Natural killer cell (primary cell): ENCODE measurements at regions of chr17 and their contacts with region 1.

Region 1: GRCh38 chr17:8189711-8190477 is at the start of gene BORCS6:
- DNase-seq: peak; percentile 91 to 98
- ATAC-seq: peak; percentile 67 to 88 (median 75)
- H3K4me3 ChIP-seq: peak within 1 kb of the TSS; percentile 67
- H3K4me3 Mint-ChIP-seq: no peak within 1 kb of the TSS
- H3K27ac ChIP-seq: peak within 1 kb of the TSS; percentile 86
- H3K27ac Mint-ChIP-seq: no peak within 1 kb of the TSS
- H3K4me1 ChIP-seq: peaks cover 57% of the 10 kb centered on the region
- H3K4me1 Mint-ChIP-seq: peaks cover 13% of the 10 kb centered on the region in 2 donors
- H3K27me3 ChIP-seq: no peaks in the 10 kb centered on the region
- H3K27me3 Mint-ChIP-seq: no peaks in the 10 kb centered on the region
- CTCF ChIP-seq: no peak
- total RNA-seq, gene BORCS6: 10.2 to 15.6 (median 11.6) TPM

Region 2: GRCh38 chr17:7989781-7990655 is 199.9 kb before region 1 on chr17:
- intact Hi-C with region 1: no loop called
- DNase-seq: peak; percentile 94
- ATAC-seq: peak; percentile 89 to 93 (median 91)
- H3K4me3 ChIP-seq: peak overlapping the region; percentile 37
- H3K4me3 Mint-ChIP-seq: peak overlapping the region; percentile 89
- H3K27ac ChIP-seq: peak overlapping the region; percentile 48
- H3K27ac Mint-ChIP-seq: peak overlapping the region; percentile 83 to 91
- H3K4me1 ChIP-seq: peaks cover 16% of the 10 kb centered on the region
- H3K4me1 Mint-ChIP-seq: peaks cover 22 to 25% of the 10 kb centered on the region in 2 donors
- H3K27me3 ChIP-seq: no peaks in the 10 kb centered on the region
- H3K27me3 Mint-ChIP-seq: peaks cover 9 to 11% of the 10 kb centered on the region in 2 donors
- CTCF ChIP-seq: peak; percentile 90

Region 3: DNA sequence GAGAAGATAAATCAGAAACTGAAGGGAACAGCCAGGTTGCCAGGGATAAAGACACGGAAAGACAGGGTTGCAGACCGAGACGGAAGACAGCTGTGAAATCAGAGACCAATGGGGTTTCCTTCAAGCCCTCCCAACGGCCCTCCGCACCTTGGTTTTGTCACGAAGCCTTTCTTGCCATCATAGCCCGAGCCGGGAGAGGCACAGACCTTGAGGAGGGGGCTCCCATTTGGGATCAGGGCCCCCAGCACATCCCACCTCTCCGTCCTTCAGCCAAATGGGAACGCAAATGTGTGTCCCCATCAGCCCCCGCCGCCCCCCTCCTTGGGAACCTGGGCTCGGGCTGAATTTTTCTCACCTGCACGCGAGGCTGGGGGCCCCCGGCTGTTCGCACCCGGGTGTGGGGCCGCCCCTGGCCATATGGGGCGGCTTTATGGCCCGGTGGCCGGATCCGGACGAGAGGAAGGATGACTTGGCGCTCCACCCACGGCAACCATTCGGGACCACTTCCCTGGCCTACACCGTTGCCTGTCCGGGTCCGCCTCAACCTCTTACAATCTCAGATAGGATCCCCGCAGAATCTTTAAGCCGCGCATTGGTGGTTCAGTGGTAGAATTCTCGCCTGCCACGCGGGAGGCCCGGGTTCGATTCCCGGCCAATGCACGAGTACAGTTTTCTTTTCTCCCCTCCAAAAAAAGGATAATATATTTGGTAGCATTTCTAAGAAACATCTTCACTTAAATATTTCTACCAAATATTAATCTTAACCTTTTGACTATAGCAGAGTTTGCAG is 64.5 kb before region 1 on chr17:
- intact Hi-C with region 1: loop called (anchors 1 kb)
- DNase-seq: peak; percentile 92
- ATAC-seq: peak; percentile 52 to 62 (median 60)
- H3K4me3 ChIP-seq: peak overlapping the region; percentile 57
- H3K4me3 Mint-ChIP-seq: peak overlapping the region; percentile 93
- H3K27ac ChIP-seq: no peak overlapping the region
- H3K27ac Mint-ChIP-seq: peak overlapping the region; percentile 95 to 98
- H3K4me1 ChIP-seq: peaks cover 65% of the 10 kb centered on the region
- H3K4me1 Mint-ChIP-seq: peaks cover 60 to 62% of the 10 kb centered on the region in 2 donors
- H3K27me3 ChIP-seq: peaks cover 33% of the 10 kb centered on the region
- H3K27me3 Mint-ChIP-seq: peaks cover 45 to 59% of the 10 kb centered on the region in 2 donors
- CTCF ChIP-seq: no peak

Region 4: GRCh38 chr17:8156246-8156992 is 33.5 kb before region 1 on chr17:
- intact Hi-C with region 1: loop called (anchors 2 kb)
- DNase-seq: peak; percentile 100
- ATAC-seq: peak; percentile 65 to 92 (median 76)
- H3K4me3 ChIP-seq: peak overlapping the region; percentile 47
- H3K4me3 Mint-ChIP-seq: no peak overlapping the region
- H3K27ac ChIP-seq: peak overlapping the region; percentile 100
- H3K27ac Mint-ChIP-seq: no peak overlapping the region
- H3K4me1 ChIP-seq: peaks cover 90% of the 10 kb centered on the region
- H3K4me1 Mint-ChIP-seq: peaks cover 33 to 54% of the 10 kb centered on the region in 2 donors
- H3K27me3 ChIP-seq: no peaks in the 10 kb centered on the region
- H3K27me3 Mint-ChIP-seq: no peaks in the 10 kb centered on the region
- CTCF ChIP-seq: no peak

Region 5: DNA sequence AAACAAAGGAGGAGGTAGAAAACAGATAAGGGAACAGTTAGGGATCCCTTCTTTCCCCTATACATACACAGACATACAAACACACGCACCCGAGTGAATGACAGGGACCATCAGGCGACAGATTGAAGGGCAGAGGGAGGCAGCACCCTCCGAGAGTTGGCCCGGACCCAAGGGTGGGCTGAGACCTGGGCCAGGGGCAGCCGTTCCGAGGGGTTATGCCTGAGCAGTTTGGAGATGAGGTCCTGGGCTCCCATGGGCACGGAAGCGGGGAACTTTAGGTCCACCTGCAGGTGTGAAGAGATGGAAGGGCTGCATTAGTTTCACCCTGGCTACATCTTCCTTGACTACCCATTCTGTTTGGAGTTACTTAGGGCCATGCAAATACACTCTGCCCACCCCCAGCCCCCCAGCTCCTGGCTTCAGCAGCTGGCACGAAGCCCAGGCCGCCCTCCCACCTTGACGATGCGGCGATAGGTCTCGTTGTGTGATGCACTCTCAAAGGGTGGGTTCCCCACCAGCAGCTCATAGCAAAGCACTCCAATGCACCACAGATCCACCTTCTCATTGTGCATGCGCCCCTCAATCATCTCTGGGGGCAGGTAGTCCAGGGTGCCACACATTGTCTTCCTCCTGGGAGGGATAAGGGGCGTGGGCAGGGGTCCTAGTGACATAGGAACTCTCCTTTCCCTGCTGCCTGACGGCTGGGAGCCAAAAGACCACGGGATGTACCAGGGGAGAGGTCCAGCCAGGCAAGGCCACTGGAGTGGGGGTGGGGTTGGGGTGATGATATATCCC is 15.1 kb after region 1 on chr17:
- intact Hi-C with region 1: loop called (anchors 1 kb)
- DNase-seq: no peak
- ATAC-seq: no peak
- H3K4me3 ChIP-seq: no peak overlapping the region
- H3K4me3 Mint-ChIP-seq: no peak overlapping the region
- H3K27ac ChIP-seq: no peak overlapping the region
- H3K27ac Mint-ChIP-seq: no peak overlapping the region
- H3K4me1 ChIP-seq: peaks cover 11% of the 10 kb centered on the region
- H3K4me1 Mint-ChIP-seq: peaks cover 6 to 12% of the 10 kb centered on the region in 2 donors
- H3K27me3 ChIP-seq: no peaks in the 10 kb centered on the region
- H3K27me3 Mint-ChIP-seq: no peaks in the 10 kb centered on the region
- CTCF ChIP-seq: no peak

Region 6: DNA sequence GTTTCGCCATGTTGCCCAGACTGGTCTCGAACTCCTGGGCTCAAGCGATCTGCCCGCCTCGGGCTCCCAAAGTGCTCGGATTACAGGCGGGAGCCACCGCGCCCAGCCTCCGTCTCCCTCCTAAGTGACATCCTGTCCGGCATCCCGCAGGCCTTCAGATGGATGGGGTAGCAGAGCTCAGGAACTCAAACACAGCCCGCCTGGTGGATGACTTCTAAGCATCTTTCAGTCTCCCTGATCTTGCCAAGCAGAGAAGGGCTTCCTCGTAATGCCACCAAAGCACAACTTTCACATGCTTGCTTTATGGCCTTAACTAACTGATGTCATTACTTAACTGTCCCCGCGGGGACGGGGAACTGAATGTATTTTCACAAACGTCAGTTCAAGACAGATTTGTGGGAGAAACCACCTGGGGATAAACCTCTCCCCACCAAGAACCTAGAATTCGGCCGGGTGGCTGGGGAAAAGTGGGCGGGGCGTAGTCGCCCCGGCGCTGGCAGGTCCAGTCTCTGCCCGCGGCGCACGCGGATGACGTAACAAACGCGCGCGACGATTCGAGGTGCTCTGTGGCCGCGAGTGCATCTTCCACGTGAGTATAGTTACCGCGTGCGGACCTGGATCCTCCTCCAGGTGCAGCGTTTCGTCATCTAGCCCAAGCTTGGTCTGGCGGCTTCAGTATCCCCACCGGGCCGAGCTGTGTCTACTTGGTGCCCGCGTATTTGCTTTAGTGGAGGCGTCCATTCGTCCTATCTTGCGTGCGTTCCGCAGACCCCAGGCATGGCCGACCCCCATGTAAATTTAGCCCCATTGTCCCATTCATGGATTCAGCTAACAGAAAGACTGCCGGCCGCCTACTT is 59.1 kb after region 1 on chr17 and contains the start of gene PFAS:
- intact Hi-C with region 1: loop called (anchors 2 kb)
- DNase-seq: peak; percentile 98 to 99
- ATAC-seq: peak; percentile 51 to 71 (median 63)
- H3K4me3 ChIP-seq: peak within 1 kb of the TSS; percentile 74
- H3K4me3 Mint-ChIP-seq: peak within 1 kb of the TSS; percentile 94
- H3K27ac ChIP-seq: peak within 1 kb of the TSS; percentile 99
- H3K27ac Mint-ChIP-seq: peak within 1 kb of the TSS; percentile 92 to 97
- H3K4me1 ChIP-seq: peaks cover 37% of the 10 kb centered on the region
- H3K4me1 Mint-ChIP-seq: peaks cover 33 to 51% of the 10 kb centered on the region in 2 donors
- H3K27me3 ChIP-seq: no peaks in the 10 kb centered on the region
- H3K27me3 Mint-ChIP-seq: no peaks in the 10 kb centered on the region
- CTCF ChIP-seq: no peak
- total RNA-seq, gene PFAS: 23.6 to 30.0 (median 24.0) TPM